K562 (cell line): ENCODE measurements at regions of chr7 and their contacts with region 1.

Region 1: GRCh38 chr7:99472561-99473243 is at the start of gene ZNF789:
- DNase-seq: peak; percentile 99 to 100 (median 99)
- ATAC-seq: peak; percentile 97
- H3K4me3 ChIP-seq: peak within 1 kb of the TSS; percentile 92
- H3K27ac ChIP-seq: peak within 1 kb of the TSS; percentile 92
- H3K4me1 ChIP-seq: peaks cover 7 to 19% of the 10 kb centered on the region in 2 experiments; a peak in 4 of 5 replicates
- H3K27me3 ChIP-seq: no peaks in the 10 kb centered on the region
- CTCF ChIP-seq: no peak; a peak in 1 of 6 replicates
- EP300 ChIP-seq: 0 out of 2 replicates have a peak, but pooled peaks have one; percentile 2
- POLR2A ChIP-seq: peak; percentile 94
- RAD21 ChIP-seq: no peak
- polyA plus RNA-seq, gene ZNF789: 6.1 to 7.4 TPM

Region 2: GRCh38 chr7:99551767-99552463 is 79.2 kb after region 1 on chr7 and contains the start of gene FAM200A:
- CTCF ChIA-PET with region 1: no interaction called
- POLR2A ChIA-PET with region 1: interaction called, 6 read pairs
- in situ Hi-C with region 1: no loop called
- intact Hi-C with region 1: loop called (anchors 10 kb)
- DNase-seq: peak; percentile 92 to 98 (median 96)
- ATAC-seq: peak; percentile 99
- H3K4me3 ChIP-seq: peak within 1 kb of the TSS; percentile 79
- H3K27ac ChIP-seq: peak within 1 kb of the TSS; percentile 76
- H3K4me1 ChIP-seq: peaks cover 7% of the 10 kb centered on the region in 2 experiments; a peak in 4 of 5 replicates
- H3K27me3 ChIP-seq: no peaks in the 10 kb centered on the region
- CTCF ChIP-seq: no peak
- EP300 ChIP-seq: no peak; the same call in 1 of the 2 replicates
- POLR2A ChIP-seq: peak; percentile 95
- RAD21 ChIP-seq: no peak; a peak in 1 of 4 replicates
- polyA plus RNA-seq, gene FAM200A: 3.3 to 4.3 TPM